Naive thymus-derived CD4-positive, alpha-beta T cell (primary cell): ENCODE measurements at regions of chr7 and their contacts with region 1.

Region 1: GRCh38 chr7:127021019-127021738 is 231.6 kb downstream of the GRM8 start:
- DNase-seq: no peak
- ATAC-seq: no peak
- H3K4me3 ChIP-seq: no peak overlapping the region
- H3K4me3 Mint-ChIP-seq: no peak overlapping the region
- H3K27ac ChIP-seq: no peak overlapping the region
- H3K27ac Mint-ChIP-seq: no peak overlapping the region
- H3K4me1 ChIP-seq: no peaks in the 10 kb centered on the region
- H3K4me1 Mint-ChIP-seq: no peaks in the 10 kb centered on the region
- H3K27me3 ChIP-seq: no peaks in the 10 kb centered on the region
- H3K27me3 Mint-ChIP-seq: peaks cover 0 to 5% (median 0%) of the 10 kb centered on the region in 5 donors

Region 2: GRCh38 chr7:126993626-126994213 is 27.5 kb before region 1 on chr7:
- CTCF ChIA-PET with region 1: no interaction called
- POLR2A ChIA-PET with region 1: no interaction called
- intact Hi-C with region 1: loop called in 1 of 2 experiments (anchors 1 kb)
- DNase-seq: no peak
- ATAC-seq: no peak
- H3K4me3 ChIP-seq: no peak overlapping the region
- H3K4me3 Mint-ChIP-seq: no peak overlapping the region
- H3K27ac ChIP-seq: no peak overlapping the region
- H3K27ac Mint-ChIP-seq: no peak overlapping the region
- H3K4me1 ChIP-seq: no peaks in the 10 kb centered on the region
- H3K4me1 Mint-ChIP-seq: no peaks in the 10 kb centered on the region
- H3K27me3 ChIP-seq: no peaks in the 10 kb centered on the region
- H3K27me3 Mint-ChIP-seq: peaks cover 0 to 28% (median 18%) of the 10 kb centered on the region in 5 donors